B cell (primary cell): ENCODE measurements at regions of chr4 and their contacts with region 1.

Region 1: GRCh38 chr4:102500696-102501446 is at the start of gene NFKB1:
- DNase-seq: peak; percentile 94
- ATAC-seq: peak; percentile 68
- H3K4me3 ChIP-seq: peak within 1 kb of the TSS; percentile 88 to 99 (median 97)
- H3K4me3 Mint-ChIP-seq: peak within 1 kb of the TSS; percentile 98
- H3K27ac ChIP-seq: peak within 1 kb of the TSS; percentile 99
- H3K27ac Mint-ChIP-seq: peak within 1 kb of the TSS; percentile 95
- H3K4me1 ChIP-seq: peaks cover 17 to 33% of the 10 kb centered on the region in 2 donors
- H3K4me1 Mint-ChIP-seq: peaks cover 36% of the 10 kb centered on the region
- H3K27me3 ChIP-seq: no peaks in the 10 kb centered on the region
- H3K27me3 Mint-ChIP-seq: no peaks in the 10 kb centered on the region
- CTCF ChIP-seq: peak; percentile 3
- total RNA-seq, gene NFKB1: 88.1 and 96.4 TPM in 2 replicates

Region 2: DNA sequence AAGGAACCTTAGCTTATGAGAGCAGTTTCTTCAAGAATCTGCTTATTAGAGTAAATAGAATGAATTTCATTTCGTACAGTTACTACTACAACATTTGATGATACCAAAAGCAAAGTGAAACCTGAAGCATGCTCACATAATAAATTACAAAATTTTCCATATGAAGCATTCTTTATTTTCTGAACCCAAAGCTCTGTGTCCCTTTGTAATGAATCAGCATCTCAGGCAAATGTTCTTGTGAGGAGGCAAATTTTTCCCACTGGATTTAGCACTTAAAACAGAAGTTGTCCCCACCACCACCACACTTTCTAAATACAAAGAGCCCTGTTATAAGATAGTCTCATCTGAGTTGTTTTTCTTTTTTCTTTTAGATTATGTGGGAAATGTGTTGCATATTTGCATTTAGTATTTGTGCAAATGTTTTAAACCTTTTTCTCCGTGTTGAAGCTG is 70.4 kb before region 1 on chr4:
- CTCF ChIA-PET with region 1: no interaction called
- POLR2A ChIA-PET with region 1: no interaction called
- intact Hi-C with region 1: loop called (anchors 5 kb)
- DNase-seq: no peak
- ATAC-seq: no peak
- H3K4me3 ChIP-seq: peak overlapping the region; percentile 48 to 79 (median 61)
- H3K4me3 Mint-ChIP-seq: peak overlapping the region; percentile 91
- H3K27ac ChIP-seq: peak overlapping the region in 1 of 2 donors; percentile 38
- H3K27ac Mint-ChIP-seq: peak overlapping the region; percentile 59
- H3K4me1 ChIP-seq: peaks cover 0 to 5% of the 10 kb centered on the region in 2 donors
- H3K4me1 Mint-ChIP-seq: peaks cover 5% of the 10 kb centered on the region
- H3K27me3 ChIP-seq: no peaks in the 10 kb centered on the region
- H3K27me3 Mint-ChIP-seq: no peaks in the 10 kb centered on the region
- CTCF ChIP-seq: no peak

Region 3: GRCh38 chr4:102535398-102536082 is 34.7 kb after region 1 on chr4:
- CTCF ChIA-PET with region 1: no interaction called
- POLR2A ChIA-PET with region 1: interaction called, 3 read pairs
- intact Hi-C with region 1: loop called (anchors 5 kb)
- DNase-seq: no peak
- ATAC-seq: no peak
- H3K4me3 ChIP-seq: no peak overlapping the region
- H3K4me3 Mint-ChIP-seq: no peak overlapping the region
- H3K27ac ChIP-seq: no peak overlapping the region
- H3K27ac Mint-ChIP-seq: no peak overlapping the region
- H3K4me1 ChIP-seq: no peaks in the 10 kb centered on the region
- H3K4me1 Mint-ChIP-seq: peaks cover 24% of the 10 kb centered on the region
- H3K27me3 ChIP-seq: no peaks in the 10 kb centered on the region
- H3K27me3 Mint-ChIP-seq: no peaks in the 10 kb centered on the region
- CTCF ChIP-seq: no peak

Region 4: GRCh38 chr4:102760645-102761295 is 259.9 kb after region 1 on chr4 and contains the start of gene MANBA:
- CTCF ChIA-PET with region 1: no interaction called
- POLR2A ChIA-PET with region 1: no interaction called
- intact Hi-C with region 1: loop called (anchors 2 kb)
- DNase-seq: peak; percentile 93
- ATAC-seq: peak; percentile 75
- H3K4me3 ChIP-seq: peak within 1 kb of the TSS; percentile 69 to 99 (median 87)
- H3K4me3 Mint-ChIP-seq: peak within 1 kb of the TSS; percentile 96
- H3K27ac ChIP-seq: peak within 1 kb of the TSS; percentile 98
- H3K27ac Mint-ChIP-seq: peak within 1 kb of the TSS; percentile 97
- H3K4me1 ChIP-seq: peaks cover 29 to 35% of the 10 kb centered on the region in 2 donors
- H3K4me1 Mint-ChIP-seq: peaks cover 51% of the 10 kb centered on the region
- H3K27me3 ChIP-seq: no peaks in the 10 kb centered on the region
- H3K27me3 Mint-ChIP-seq: no peaks in the 10 kb centered on the region
- CTCF ChIP-seq: no peak
- total RNA-seq, gene MANBA: 119 and 132 TPM in 2 replicates

Region 5: GRCh38 chr4:103019308-103020124 is 518.6 kb after region 1 on chr4 and contains the start of gene SLC9B1:
- CTCF ChIA-PET with region 1: no interaction called
- POLR2A ChIA-PET with region 1: no interaction called
- intact Hi-C with region 1: loop called (anchors 5 kb)
- DNase-seq: peak; percentile 94
- ATAC-seq: peak; percentile 98
- H3K4me3 ChIP-seq: peak within 1 kb of the TSS; percentile 65 to 92 (median 82)
- H3K4me3 Mint-ChIP-seq: peak within 1 kb of the TSS; percentile 96
- H3K27ac ChIP-seq: peak within 1 kb of the TSS; percentile 94 to 98
- H3K27ac Mint-ChIP-seq: peak within 1 kb of the TSS; percentile 95
- H3K4me1 ChIP-seq: peaks cover 17 to 21% of the 10 kb centered on the region in 2 donors
- H3K4me1 Mint-ChIP-seq: peaks cover 27% of the 10 kb centered on the region
- H3K27me3 ChIP-seq: no peaks in the 10 kb centered on the region
- H3K27me3 Mint-ChIP-seq: no peaks in the 10 kb centered on the region
- CTCF ChIP-seq: no peak
- total RNA-seq, gene SLC9B1: 1.9 and 2.1 TPM in 2 replicates